ENCODE measurements at regions of chr2 and their contacts with region 1.

Region 1: DNA sequence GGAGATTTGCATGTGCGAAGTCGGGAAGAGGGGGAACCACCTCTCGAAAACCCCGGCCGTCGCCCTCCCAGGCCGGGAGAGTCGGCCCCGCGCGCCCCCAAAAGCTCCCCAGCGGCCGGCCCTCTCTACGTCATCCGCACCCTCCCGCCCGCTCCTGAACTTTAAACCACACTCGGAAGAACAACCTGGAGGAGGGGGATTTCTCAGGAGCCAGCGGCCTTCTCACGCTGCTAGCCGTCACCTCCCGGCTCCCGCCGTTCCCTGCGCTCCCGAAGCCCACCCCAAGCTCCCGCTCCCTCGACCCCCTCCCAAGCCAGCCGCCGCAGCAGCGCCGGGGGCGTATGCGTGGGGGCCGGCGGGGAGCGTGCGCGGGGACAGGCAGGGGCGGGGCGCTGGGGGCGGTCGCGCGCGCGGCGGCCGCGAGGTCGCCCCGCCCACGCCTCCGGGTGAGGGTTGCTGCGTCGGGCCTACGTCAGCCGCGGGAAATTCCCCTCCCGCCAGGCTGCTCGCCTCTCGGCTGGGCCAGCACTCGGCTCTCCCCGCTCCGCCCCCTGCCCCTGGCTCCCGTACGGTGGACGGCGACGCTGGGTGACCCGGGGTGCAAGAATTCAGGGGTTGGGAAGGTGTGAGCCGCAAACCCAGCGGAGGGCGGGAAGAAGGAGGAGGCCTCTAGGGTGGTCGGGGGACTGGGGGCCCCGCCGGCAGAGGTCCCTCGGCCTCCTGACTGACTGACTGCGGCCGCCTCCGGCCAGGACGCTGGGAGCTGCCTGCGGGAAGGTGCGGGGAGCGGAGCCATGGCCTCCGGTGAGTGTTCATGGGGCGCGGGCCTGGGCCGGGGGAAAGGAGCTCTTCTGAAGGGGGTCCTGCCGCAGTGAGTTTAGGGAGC is at the start of gene REL:
- H3K4me3 Mint-ChIP-seq: peak within 1 kb of the TSS; percentile 99
- H3K27ac Mint-ChIP-seq: peak within 1 kb of the TSS; percentile 99
- H3K4me1 Mint-ChIP-seq: peaks cover 22% of the 10 kb centered on the region
- H3K27me3 Mint-ChIP-seq: no peaks in the 10 kb centered on the region

Region 2: DNA sequence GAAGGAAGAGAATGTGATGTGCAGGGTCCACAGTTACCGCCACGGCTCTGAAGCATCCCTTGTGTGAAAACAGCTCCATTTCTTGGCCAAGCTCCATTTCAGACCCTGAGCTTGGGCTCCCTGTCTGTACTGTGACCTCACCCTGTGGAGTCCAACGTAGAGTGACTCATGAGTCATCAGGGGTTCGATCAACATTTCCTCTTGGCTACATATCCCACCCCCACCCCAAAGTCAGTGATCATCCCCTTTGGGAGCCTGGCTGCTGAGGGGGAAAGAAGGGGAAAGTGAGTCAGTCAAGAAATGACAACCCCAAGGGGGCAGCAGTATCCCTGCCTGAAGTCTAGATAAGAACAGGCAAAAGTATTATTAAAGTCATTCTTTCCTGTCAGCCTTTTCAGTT is 63.0 kb before region 1 on chr2:
- intact Hi-C with region 1: loop called (anchors 5 kb)
- H3K4me3 Mint-ChIP-seq: no peak overlapping the region
- H3K27ac Mint-ChIP-seq: no peak overlapping the region
- H3K4me1 Mint-ChIP-seq: peaks cover 29% of the 10 kb centered on the region
- H3K27me3 Mint-ChIP-seq: no peaks in the 10 kb centered on the region

Region 3: DNA sequence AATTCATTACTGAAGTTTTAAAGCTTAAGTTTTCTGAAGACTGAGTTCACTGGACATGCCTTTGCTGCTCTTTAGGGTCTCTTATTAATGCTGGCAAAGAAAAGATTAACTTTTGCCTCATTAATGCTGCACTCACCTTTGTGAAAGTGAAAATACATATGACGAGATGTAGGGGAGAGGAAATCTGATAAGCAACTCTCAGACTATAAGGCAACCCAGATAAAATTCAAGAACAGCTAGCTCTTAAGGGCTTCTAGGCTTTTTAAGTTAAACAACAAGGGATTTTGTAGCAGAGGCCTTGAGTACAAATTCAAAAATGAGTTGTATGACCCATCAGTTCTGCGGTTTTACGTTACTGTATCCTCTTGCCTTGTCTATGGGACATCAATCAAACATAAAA is 445.9 kb after region 1 on chr2:
- intact Hi-C with region 1: no loop called
- H3K4me3 Mint-ChIP-seq: no peak overlapping the region
- H3K27ac Mint-ChIP-seq: no peak overlapping the region
- H3K4me1 Mint-ChIP-seq: no peaks in the 10 kb centered on the region
- H3K27me3 Mint-ChIP-seq: no peaks in the 10 kb centered on the region